ENCODE measurements at regions of chr17 and their contacts with region 1.

Region 1: DNA sequence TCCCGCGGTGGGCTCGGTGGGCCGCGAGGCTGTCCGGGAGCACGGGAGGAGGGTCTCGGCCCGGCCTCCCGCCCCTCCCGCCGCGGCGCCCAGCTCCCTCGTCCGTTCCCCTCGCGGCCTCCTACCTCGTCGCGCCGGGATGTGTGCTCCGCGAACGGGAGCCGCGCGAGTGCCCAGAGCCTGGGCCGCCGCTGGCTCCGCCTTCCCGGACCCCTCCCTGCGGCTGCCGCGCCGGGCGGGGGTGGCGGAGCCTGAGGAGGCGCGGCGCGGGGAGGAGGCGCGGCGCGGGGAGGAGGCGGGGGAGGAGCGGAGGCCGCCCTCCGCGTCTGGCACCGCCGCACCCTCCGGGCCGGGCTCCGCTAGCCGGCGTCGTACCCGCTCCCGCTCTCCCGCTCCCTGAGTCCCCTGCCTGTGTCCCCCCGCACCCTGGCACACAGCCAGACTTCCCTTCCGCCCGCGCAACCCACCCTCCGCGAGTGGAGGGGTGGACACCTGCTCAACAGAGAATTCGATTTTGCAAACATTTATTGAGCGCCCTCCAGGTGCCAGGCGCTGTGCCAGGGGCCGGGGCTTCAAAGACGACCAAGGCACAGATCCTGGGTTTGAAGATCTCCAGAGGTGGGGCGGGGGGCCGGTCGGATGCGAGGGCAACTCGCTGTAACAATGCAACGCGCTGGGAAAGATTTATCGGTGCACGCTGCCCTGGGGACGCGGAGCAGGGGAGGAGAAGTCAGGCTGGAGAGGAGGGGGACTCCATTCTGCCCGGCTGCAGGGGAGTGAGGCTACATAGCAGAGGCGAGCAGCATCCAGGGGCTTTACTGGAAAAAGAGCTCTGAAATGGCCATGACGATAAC is at the start of gene MPP3:
- DNase-seq: peak; percentile 52 to 83
- H3K4me3 ChIP-seq: peak within 1 kb of the TSS; percentile 66 to 68
- H3K27ac ChIP-seq: peak within 1 kb of the TSS; percentile 72 to 75
- H3K4me1 ChIP-seq: peaks cover 0 to 22% (median 18%) of the 10 kb centered on the region in 4 donors
- H3K27me3 ChIP-seq: no peaks in the 10 kb centered on the region
- CTCF ChIP-seq: no peak

Region 2: DNA sequence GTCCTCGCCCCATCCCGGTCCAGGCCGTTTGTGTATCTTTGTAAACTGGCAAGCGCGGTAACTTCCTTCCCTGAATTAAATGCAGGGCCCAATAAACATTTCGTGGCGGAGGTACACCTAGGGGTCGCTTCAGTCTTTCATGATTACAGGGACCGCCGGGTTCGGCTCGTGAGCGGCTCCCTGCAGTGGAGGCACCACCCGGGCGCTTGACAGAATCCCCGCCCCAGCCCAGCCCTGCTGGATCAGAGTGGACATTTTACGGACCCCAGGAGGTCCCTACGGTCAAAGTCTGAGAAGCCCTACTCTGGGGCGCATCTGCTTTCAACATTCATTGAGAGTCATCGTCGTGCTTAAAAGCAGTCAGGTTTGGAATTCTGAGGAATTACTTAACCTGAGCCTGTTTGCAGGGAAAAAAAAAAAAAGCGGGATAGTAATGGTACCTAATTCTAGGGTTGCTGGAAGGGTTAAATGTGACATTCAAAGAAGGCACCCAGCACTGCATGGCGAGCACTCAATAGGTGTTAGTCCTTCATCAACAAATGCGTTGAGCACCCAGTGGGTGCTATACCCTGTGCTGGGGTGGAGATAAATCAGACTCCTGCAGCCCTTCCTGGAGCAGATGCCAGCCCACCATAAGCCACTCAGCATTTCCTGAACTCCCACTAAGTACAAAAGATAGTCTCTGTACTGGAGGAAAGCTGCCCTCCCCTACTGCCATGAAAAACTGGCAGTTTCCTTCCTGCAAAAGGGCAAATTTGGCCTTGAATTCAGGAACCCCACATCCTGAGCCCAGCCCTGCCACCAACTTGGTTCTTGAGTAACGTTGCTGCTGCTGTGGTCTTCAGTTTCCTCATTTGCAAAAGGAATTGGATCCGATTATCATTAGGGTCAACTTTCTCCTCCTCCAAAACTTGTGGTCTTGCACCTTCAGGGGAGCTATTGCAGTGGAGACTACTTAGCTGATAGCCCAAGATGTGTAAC is 53.8 kb before region 1 on chr17:
- intact Hi-C with region 1: loop called (anchors 10 kb)
- DNase-seq: peak in 1 of 2 donors; percentile 48
- H3K4me3 ChIP-seq: peak overlapping the region; percentile 75 to 94
- H3K27ac ChIP-seq: peak overlapping the region; percentile 97 to 100
- H3K4me1 ChIP-seq: peaks cover 0 to 37% (median 25%) of the 10 kb centered on the region in 4 donors
- H3K27me3 ChIP-seq: peaks cover 0 to 4% of the 10 kb centered on the region in 2 donors
- CTCF ChIP-seq: no peak